Activated CD4-positive, alpha-beta memory T cell treated with anti-CD3 and anti-CD28 coated beads, Interleukin-2, amount 10 ng/mL, durations not matched to agents 7 days and 5 days (primary cell): ENCODE measurements at regions of chr1 and their contacts with region 1.

Region 1: DNA sequence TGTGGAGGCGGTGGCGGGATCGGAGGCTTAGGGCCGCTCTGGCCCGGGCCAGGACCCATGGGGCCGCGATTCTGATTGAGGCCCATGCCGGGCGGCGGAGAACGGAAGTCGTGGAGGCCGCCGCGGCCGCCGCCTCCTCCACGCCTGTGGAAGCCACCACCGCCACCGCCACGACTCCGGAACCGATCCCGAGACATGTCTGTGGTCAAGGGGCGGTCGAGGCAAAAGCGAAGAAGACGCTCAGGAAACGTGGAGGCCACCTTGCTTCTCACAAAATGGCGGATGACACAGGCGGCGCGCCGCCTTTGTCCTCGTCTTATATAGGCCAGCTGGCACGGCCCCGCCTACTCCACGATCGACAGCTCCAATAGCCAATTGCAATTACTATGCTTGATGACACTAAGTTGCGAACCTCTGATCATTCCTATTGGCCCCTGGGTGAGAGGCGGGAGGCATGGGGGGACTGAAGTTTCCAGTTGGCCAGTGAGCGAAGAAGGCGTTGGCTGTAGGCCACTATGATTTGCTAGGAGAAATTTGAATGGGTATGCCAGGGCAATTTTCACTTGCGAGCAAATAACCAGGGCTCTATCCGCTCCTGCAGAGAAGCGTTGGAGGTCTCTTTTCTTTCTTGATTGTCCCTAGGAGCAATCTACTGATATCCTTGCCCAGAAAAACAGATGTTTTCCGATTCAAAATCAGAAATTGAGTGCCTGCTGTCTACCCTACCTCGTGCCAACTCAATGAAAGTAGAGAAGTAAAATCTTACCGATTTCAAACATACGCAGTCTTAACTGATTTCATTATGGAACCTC is at the start of gene SFPQ:
- DNase-seq: peak; percentile 97
- H3K4me3 Mint-ChIP-seq: peak within 1 kb of the TSS; percentile 94
- H3K27ac Mint-ChIP-seq: peak within 1 kb of the TSS; percentile 99
- H3K4me1 Mint-ChIP-seq: peaks cover 44% of the 10 kb centered on the region
- H3K27me3 Mint-ChIP-seq: peaks cover 2% of the 10 kb centered on the region
- total RNA-seq, gene SFPQ: 319 to 328 TPM

Region 2: DNA sequence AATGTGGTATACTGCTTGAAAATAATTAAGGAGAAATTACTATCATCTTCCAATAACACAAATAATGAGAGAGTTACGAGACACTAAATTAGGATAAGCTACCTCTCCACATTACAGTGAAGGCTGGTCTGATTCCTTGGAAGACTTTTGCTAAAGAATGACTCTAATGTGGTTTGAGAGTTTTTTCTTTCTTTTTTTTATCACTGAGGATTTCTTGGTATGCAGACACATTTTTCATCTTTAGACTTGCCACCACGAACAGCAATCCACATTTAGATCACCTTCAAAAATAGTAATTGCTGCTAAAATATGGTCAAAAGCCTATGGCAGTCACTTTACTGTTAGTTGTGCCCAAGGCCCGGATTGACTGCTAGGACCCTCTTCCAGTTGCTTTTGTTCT is 191.3 kb before region 1 on chr1:
- CTCF ChIA-PET with region 1: no interaction called
- POLR2A ChIA-PET with region 1: no interaction called
- DNase-seq: no peak
- H3K4me3 Mint-ChIP-seq: no peak overlapping the region
- H3K27ac Mint-ChIP-seq: no peak overlapping the region
- H3K4me1 Mint-ChIP-seq: no peaks in the 10 kb centered on the region
- H3K27me3 Mint-ChIP-seq: no peaks in the 10 kb centered on the region

Region 3: GRCh38 chr1:35180776-35181374 is 12.2 kb before region 1 on chr1:
- CTCF ChIA-PET with region 1: no interaction called
- POLR2A ChIA-PET with region 1: interaction called, 20 read pairs
- DNase-seq: no peak
- H3K4me3 Mint-ChIP-seq: no peak overlapping the region
- H3K27ac Mint-ChIP-seq: peak overlapping the region; percentile 3
- H3K4me1 Mint-ChIP-seq: peaks cover 68% of the 10 kb centered on the region
- H3K27me3 Mint-ChIP-seq: no peaks in the 10 kb centered on the region

Region 4: DNA sequence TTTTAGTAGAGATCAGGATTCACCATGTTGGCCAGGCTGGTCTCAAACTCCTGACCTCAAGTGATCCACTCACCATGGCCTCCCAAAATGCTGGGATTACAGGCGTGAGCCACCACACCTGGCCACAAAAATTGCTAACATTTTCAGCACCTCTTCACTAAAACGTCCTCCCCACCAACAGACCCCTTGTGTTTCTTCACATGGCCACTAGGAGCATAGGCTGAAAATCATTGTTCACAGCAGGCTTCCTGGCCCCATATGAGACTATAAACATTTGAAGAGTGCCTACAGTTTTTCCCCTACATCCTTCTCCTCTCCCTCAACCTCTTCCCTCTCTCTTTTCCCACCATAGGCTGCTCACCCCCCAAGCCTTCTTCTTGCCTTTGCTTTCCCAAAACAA is 27.9 kb after region 1 on chr1:
- CTCF ChIA-PET with region 1: no interaction called
- POLR2A ChIA-PET with region 1: no interaction called
- DNase-seq: no peak
- H3K4me3 Mint-ChIP-seq: no peak overlapping the region
- H3K27ac Mint-ChIP-seq: no peak overlapping the region
- H3K4me1 Mint-ChIP-seq: no peaks in the 10 kb centered on the region
- H3K27me3 Mint-ChIP-seq: no peaks in the 10 kb centered on the region